ENCODE measurements at regions of chr1 and their contacts with region 1.

Region 1: DNA sequence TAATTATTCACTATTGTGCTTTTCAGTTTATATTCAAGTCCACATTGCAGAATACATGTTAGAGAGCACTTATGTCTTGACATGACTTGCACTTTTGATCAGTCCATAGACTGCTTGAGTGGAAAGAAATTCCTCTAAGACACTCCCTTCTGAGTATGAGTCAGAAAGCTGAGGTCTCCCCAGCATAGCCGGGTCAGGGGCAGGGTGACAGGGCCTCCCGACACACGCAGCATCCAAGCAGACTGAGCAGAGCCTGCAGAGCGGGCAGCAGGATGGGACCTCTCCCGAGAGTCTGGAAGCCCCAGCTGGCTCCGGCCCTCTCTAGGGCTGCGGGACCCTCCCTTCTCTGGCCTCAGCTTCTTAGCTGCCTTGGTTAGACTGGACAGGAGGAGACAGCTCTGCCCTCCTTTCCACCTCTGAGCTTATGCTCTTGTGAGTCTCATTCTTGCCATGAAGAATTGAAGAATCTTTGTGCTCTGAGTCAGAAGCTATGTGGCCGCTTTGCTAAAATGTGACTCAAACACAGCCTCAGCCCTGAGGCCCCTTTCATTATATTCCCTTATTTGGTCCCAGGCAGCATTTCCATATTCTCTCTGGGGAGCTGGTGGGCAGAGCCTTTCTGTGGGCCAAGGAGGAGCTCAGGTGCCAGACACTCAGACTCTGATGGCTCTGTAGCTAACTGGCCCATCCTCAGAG is 11.2 kb upstream of the CAPN2 start:
- DNase-seq: peak; percentile 59
- ATAC-seq: peak; percentile 75
- H3K4me3 Mint-ChIP-seq: no peak overlapping the region
- H3K27ac Mint-ChIP-seq: peak overlapping the region; percentile 55
- H3K4me1 Mint-ChIP-seq: peaks cover 34% of the 10 kb centered on the region
- H3K27me3 Mint-ChIP-seq: peaks cover 4% of the 10 kb centered on the region

Region 2: DNA sequence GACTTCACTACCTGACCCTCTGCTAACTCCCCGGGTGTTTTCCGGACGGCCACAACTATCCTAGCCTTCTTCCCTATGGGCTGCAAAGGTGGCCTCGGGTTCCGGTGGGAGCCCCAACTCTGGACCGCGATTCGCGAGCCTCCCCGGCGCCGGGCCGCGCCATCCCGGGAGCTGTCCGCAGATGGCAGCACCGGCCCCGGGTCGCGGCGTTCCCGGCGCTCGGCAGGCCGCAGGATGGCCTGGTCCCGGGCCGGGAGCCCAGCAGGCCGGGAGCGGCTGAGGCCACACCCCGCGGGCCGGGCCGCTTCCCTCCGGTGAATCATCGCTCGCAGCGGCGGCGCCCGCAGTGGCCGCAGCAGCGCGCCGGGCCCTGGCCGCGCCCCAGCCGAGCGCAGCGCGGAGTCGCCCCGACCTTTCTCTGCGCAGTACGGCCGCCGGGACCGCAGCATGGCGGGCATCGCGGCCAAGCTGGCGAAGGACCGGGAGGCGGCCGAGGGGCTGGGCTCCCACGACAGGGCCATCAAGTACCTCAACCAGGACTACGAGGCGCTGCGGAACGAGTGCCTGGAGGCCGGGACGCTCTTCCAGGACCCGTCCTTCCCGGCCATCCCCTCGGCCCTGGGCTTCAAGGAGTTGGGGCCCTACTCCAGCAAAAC is 11.2 kb after region 1 on chr1 and contains the start of gene CAPN2:
- CTCF ChIA-PET with region 1: interaction called, 10 read pairs
- POLR2A ChIA-PET with region 1: no interaction called
- intact Hi-C with region 1: no loop called
- DNase-seq: peak; percentile 76
- ATAC-seq: peak; percentile 47
- H3K4me3 Mint-ChIP-seq: peak within 1 kb of the TSS; percentile 80
- H3K27ac Mint-ChIP-seq: peak within 1 kb of the TSS; percentile 82
- H3K4me1 Mint-ChIP-seq: peaks cover 62% of the 10 kb centered on the region
- H3K27me3 Mint-ChIP-seq: no peaks in the 10 kb centered on the region
- total RNA-seq, gene CAPN2: 31.1 to 33.1 TPM

Region 3: GRCh38 chr1:223831755-223832636 is 130.9 kb after region 1 on chr1:
- CTCF ChIA-PET with region 1: no interaction called
- POLR2A ChIA-PET with region 1: no interaction called
- intact Hi-C with region 1: loop called (anchors 1 to 5 kb)
- DNase-seq: no peak
- ATAC-seq: peak; percentile 71
- H3K4me3 Mint-ChIP-seq: no peak overlapping the region
- H3K27ac Mint-ChIP-seq: no peak overlapping the region
- H3K4me1 Mint-ChIP-seq: peaks cover 29% of the 10 kb centered on the region
- H3K27me3 Mint-ChIP-seq: no peaks in the 10 kb centered on the region

Region 4: DNA sequence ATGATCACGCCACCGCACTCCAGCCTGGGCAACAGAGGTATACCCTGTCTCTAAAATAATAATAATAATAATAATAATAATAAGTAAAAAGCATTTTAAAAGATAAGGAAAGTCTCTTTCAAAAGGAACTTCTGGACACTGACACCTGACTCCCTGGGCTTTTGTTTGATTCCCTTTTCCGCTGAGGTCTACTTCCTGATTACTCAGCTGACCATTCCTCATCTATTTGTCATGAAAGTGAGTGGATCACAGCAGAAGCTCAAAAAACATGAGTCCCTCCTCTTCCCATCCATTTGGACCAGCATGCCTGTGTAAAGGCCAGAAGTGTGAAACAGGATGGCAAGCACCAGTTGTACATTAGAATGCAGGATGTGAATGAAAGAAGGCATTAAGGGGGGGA is 351.7 kb after region 1 on chr1:
- CTCF ChIA-PET with region 1: interaction called, 8 read pairs
- POLR2A ChIA-PET with region 1: interaction called, 3 read pairs
- intact Hi-C with region 1: loop called (anchors 1 kb)
- DNase-seq: no peak
- ATAC-seq: no peak
- H3K4me3 Mint-ChIP-seq: no peak overlapping the region
- H3K27ac Mint-ChIP-seq: no peak overlapping the region
- H3K4me1 Mint-ChIP-seq: no peaks in the 10 kb centered on the region
- H3K27me3 Mint-ChIP-seq: peaks cover 7% of the 10 kb centered on the region